ENCODE measurements at regions of chr11 and their contacts with region 1.

Region 1: DNA sequence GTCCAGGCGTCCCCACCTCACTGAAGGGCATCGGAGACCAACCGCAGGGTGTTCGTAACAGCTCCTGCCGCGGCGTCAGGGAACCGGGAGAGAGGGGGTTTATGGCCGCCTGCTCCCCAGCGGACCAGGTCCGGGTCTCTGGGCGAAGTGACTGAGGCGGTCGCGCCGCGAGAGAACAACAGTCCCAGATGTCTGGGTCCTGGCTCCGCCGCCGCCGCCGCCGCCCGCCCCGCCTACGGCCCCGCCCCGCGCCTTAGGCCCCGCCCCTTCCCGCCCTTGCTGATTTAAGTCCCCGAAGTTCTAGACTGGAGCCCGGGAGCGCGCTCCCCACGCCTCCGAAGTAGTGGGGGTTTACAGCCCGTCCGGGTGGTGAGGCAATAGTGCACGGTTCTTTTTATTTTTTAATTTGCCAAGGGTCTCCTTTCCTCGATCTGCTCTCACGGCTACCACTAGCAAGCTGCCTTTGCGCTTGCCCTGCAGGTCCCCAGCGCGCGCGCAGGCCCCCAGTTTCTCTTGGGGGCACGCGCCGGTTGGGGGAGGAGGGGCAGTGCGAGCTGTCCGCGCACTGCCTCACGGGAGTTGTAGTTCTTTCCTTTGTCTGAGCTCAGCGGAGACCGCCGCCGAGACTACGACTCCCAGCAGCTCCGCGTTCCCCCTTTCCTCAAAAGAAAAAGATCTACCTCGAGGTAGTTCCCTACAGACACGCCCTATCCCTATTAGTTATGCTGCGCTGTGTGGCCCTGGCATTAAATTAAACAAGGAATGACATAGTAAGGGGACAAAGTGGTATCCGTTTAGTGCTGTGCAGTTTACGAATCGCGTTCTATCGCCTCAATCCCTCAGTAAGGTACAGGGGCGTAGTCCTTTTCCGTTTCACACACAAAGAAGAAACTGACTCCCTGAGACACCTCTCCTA is at the start of gene PGM2L1:
- DNase-seq: peak; percentile 93 to 96 (median 95)
- H3K4me3 ChIP-seq: peak within 1 kb of the TSS; percentile 81 to 83
- H3K4me3 Mint-ChIP-seq: peak within 1 kb of the TSS; percentile 99 to 100 (median 100)
- H3K27ac ChIP-seq: peak within 1 kb of the TSS; percentile 80
- H3K27ac Mint-ChIP-seq: peak within 1 kb of the TSS; percentile 92 to 100 (median 99)
- H3K4me1 ChIP-seq: peaks cover 20% of the 10 kb centered on the region
- H3K4me1 Mint-ChIP-seq: peaks cover 16 to 37% (median 27%) of the 10 kb centered on the region in 4 donors
- H3K27me3 ChIP-seq: no peaks in the 10 kb centered on the region
- H3K27me3 Mint-ChIP-seq: no peaks in the 10 kb centered on the region
- total RNA-seq, gene PGM2L1: 10.4 to 11.2 TPM

Region 2: GRCh38 chr11:73779084-73779902 is 619.2 kb before region 1 on chr11:
- CTCF ChIA-PET with region 1: no interaction called
- POLR2A ChIA-PET with region 1: interaction called, 6 read pairs
- intact Hi-C with region 1: loop called (anchors 2 kb)
- DNase-seq: peak; percentile 97 to 98 (median 98)
- H3K4me3 ChIP-seq: peak overlapping the region; percentile 58 to 62
- H3K4me3 Mint-ChIP-seq: peak overlapping the region; percentile 91 to 97 (median 94)
- H3K27ac ChIP-seq: peak overlapping the region; percentile 90
- H3K27ac Mint-ChIP-seq: peak overlapping the region; percentile 96 to 100 (median 100)
- H3K4me1 ChIP-seq: peaks cover 5% of the 10 kb centered on the region
- H3K4me1 Mint-ChIP-seq: peaks cover 6 to 13% (median 7%) of the 10 kb centered on the region in 4 donors
- H3K27me3 ChIP-seq: no peaks in the 10 kb centered on the region
- H3K27me3 Mint-ChIP-seq: peaks cover 0 to 4% of the 10 kb centered on the region in 2 donors

Region 3: DNA sequence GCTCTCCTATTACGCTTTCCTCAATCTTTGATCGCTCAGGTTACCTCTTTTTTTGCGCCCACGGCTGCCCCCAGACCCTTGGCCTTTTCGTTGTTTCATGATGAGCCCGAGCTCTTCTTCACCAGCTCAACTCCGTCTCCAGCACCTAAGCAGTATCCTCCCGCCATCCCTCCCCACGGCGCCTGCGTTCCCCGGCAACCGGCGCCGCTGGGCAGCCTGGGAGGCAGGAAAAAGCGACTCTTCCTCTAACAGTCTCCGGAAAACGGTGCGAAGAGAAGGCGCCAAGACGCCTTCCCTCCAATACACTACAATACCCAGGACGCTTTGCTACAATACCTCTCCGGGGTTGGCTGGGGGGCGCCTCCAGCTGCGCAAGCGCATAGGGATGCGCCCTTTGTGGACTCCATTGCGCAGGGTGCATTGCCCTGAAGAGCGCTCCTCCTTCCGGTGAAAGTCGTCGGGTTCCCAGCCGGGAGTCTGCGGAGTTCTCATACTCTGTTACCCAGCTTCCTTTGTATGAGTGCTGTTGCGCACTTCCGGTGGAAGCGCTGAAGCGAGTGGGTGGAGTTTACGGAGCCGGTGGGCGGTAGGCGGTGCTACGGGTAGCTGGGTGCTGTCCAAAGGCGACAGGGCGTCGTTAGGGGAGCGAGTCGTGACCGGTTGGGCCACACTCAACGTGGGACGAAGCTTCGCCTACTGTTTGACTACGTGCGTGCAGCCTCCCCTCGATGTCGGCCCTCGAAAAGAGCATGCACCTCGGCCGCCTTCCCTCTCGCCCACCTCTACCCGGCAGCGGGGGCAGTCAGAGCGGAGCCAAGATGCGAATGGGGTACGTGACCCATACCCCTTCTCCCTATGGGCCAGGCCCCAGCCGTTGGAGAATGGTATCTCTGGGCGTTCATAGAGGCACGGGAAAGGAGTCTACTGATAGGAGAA is 227.5 kb before region 1 on chr11 and contains the starts of genes C2CD3 and PPME1:
- CTCF ChIA-PET with region 1: no interaction called
- POLR2A ChIA-PET with region 1: no interaction called
- intact Hi-C with region 1: loop called (anchors 1 kb)
- DNase-seq: peak; percentile 97 to 99 (median 99)
- H3K4me3 ChIP-seq: peak within 1 kb of the TSS; percentile 74 to 86
- H3K4me3 Mint-ChIP-seq: no peak within 1 kb of the TSS
- H3K27ac ChIP-seq: peak within 1 kb of the TSS; percentile 70
- H3K27ac Mint-ChIP-seq: no peak within 1 kb of the TSS
- H3K4me1 ChIP-seq: peaks cover 40% of the 10 kb centered on the region
- H3K4me1 Mint-ChIP-seq: peaks cover 18 to 22% (median 18%) of the 10 kb centered on the region in 4 donors
- H3K27me3 ChIP-seq: no peaks in the 10 kb centered on the region
- H3K27me3 Mint-ChIP-seq: no peaks in the 10 kb centered on the region
- total RNA-seq, gene C2CD3: 41.9 to 52.7 TPM
- total RNA-seq, gene PPME1: 20.7 to 21.9 TPM

Region 4: GRCh38 chr11:74492974-74493790 is 94.7 kb after region 1 on chr11 and contains the start of gene LIPT2:
- CTCF ChIA-PET with region 1: interaction called, 9 read pairs
- POLR2A ChIA-PET with region 1: interaction called, 40 read pairs
- intact Hi-C with region 1: loop called (anchors 1 kb)
- DNase-seq: peak; percentile 95 to 98 (median 97)
- H3K4me3 ChIP-seq: peak within 1 kb of the TSS; percentile 39 to 84
- H3K4me3 Mint-ChIP-seq: peak within 1 kb of the TSS; percentile 87 to 93 (median 88)
- H3K27ac ChIP-seq: peak within 1 kb of the TSS; percentile 94
- H3K27ac Mint-ChIP-seq: peak within 1 kb of the TSS; percentile 73 to 96 (median 93)
- H3K4me1 ChIP-seq: peaks cover 12% of the 10 kb centered on the region
- H3K4me1 Mint-ChIP-seq: peaks cover 9 to 32% (median 20%) of the 10 kb centered on the region in 4 donors
- H3K27me3 ChIP-seq: no peaks in the 10 kb centered on the region
- H3K27me3 Mint-ChIP-seq: no peaks in the 10 kb centered on the region
- total RNA-seq, gene LIPT2: 8.0 to 15.5 TPM

Region 5: DNA sequence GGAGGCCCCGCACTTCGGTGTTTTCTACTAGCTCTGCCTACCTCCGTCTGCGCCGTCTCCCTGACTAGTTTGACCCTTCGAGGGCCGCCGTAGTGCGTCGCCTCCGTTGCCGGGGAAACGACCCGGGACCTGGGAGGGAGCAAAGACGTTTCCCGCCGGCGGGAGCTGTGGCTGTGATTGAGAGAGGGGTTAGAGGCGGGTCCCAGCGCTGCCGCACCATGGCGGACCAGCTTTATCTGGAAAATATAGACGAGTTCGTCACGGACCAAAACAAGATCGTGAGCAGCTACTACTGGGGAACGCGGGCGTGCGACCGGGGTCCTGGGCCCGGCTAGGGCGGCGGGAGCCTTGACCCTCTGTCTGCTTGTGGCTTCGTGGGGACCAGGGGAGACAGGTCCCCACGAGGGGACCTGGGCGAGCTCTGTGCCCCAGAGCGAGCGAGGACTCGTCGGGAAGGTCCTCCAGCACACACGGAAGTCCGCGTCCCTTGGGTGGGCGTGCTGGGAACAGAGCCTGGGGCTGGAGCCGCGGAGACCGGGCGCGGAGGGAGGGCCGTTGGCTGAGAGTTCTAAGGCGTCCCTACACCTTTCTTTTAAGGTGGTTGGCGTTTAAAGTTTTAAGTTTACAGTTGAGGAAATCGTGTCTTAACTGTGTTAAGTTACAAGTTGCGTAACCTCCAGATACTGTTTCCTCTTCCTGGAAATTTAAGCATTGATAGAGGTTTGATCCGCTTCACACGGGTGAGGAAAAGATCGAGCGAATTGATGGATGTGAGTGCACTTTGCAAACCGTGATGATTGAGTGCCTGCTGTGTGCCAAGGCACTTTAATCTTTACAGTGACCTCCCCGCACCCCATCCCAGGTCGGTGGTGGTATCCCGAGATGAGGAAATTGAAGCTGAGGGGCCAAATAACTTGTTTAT is 194.2 kb after region 1 on chr11 and contains the start of gene POLD3:
- CTCF ChIA-PET with region 1: no interaction called
- POLR2A ChIA-PET with region 1: interaction called, 5 read pairs
- intact Hi-C with region 1: loop called (anchors 1 kb)
- DNase-seq: peak; percentile 92 to 96 (median 94)
- H3K4me3 ChIP-seq: peak within 1 kb of the TSS; percentile 66 to 98
- H3K4me3 Mint-ChIP-seq: peak within 1 kb of the TSS; percentile 95 to 100 (median 98)
- H3K27ac ChIP-seq: peak within 1 kb of the TSS; percentile 87
- H3K27ac Mint-ChIP-seq: peak within 1 kb of the TSS; percentile 93 to 99 (median 99)
- H3K4me1 ChIP-seq: peaks cover 22% of the 10 kb centered on the region
- H3K4me1 Mint-ChIP-seq: peaks cover 17 to 33% (median 26%) of the 10 kb centered on the region in 4 donors
- H3K27me3 ChIP-seq: no peaks in the 10 kb centered on the region
- H3K27me3 Mint-ChIP-seq: no peaks in the 10 kb centered on the region
- total RNA-seq, gene POLD3: 15.0 to 16.8 TPM

Region 6: DNA sequence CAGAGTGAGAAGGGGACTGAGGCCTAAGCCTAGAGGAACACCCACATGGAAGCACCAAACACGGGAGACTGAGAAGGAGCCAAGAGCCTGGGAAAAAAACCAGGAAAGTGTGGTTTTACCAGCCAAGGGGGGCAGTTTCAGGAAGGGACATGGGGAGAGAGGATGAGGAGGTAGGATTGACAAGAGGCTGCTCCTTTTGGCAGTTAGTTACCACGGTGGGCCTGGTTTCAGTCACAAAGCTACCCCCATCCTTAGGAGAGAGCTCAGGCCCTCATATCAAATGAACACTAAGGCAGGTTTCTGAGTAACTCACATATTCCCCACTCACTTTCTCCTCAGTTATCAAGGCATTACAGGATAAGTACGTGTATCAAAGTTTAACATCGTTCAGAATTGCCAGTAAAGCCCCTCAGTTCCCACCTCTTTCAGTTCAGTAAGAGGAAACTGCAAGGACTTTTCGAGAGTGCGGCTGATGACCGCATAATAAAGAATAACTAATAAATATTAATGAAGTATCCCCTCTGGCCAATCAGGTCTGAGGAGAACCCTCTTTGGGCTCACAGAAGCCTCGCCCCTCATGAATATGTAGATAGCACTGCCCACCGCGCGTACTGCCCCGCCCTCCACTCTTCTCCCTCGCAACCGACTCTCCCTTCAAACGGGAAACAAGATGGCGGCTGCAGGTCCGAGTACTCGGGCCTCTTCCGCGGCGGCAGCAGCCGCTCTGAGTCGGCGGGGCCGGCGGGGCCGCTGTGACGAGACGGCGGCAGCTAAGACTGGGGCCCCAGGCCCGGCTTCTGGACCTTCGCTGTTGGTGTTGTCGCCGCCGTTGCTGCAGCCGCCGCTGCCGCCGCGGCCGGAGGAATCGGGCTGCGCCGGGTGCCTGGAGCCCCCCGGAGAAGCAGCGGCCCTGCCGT is 350.0 kb after region 1 on chr11 and contains the start of gene RNF169:
- CTCF ChIA-PET with region 1: no interaction called
- POLR2A ChIA-PET with region 1: no interaction called
- intact Hi-C with region 1: loop called (anchors 1 kb)
- DNase-seq: peak; percentile 88 to 95 (median 89)
- H3K4me3 ChIP-seq: peak within 1 kb of the TSS; percentile 63 to 73
- H3K4me3 Mint-ChIP-seq: peak within 1 kb of the TSS; percentile 89 to 97 (median 92)
- H3K27ac ChIP-seq: peak within 1 kb of the TSS; percentile 72
- H3K27ac Mint-ChIP-seq: peak within 1 kb of the TSS; percentile 84 to 98 (median 94)
- H3K4me1 ChIP-seq: peaks cover 38% of the 10 kb centered on the region
- H3K4me1 Mint-ChIP-seq: peaks cover 29 to 59% (median 38%) of the 10 kb centered on the region in 4 donors
- H3K27me3 ChIP-seq: no peaks in the 10 kb centered on the region
- H3K27me3 Mint-ChIP-seq: no peaks in the 10 kb centered on the region
- total RNA-seq, gene RNF169: 24.6 to 25.0 TPM

Region 7: GRCh38 chr11:74948898-74949747 is 550.6 kb after region 1 on chr11 and contains the starts of genes SPCS2 and XRRA1:
- CTCF ChIA-PET with region 1: no interaction called
- POLR2A ChIA-PET with region 1: no interaction called
- intact Hi-C with region 1: loop called (anchors 10 kb)
- DNase-seq: peak; percentile 96 to 99 (median 97)
- H3K4me3 ChIP-seq: peak within 1 kb of the TSS; percentile 78 to 100
- H3K4me3 Mint-ChIP-seq: peak within 1 kb of the TSS; percentile 93 to 100 (median 98)
- H3K27ac ChIP-seq: peak within 1 kb of the TSS; percentile 89
- H3K27ac Mint-ChIP-seq: peak within 1 kb of the TSS; percentile 93 to 100 (median 96)
- H3K4me1 ChIP-seq: peaks cover 52% of the 10 kb centered on the region
- H3K4me1 Mint-ChIP-seq: peaks cover 38 to 56% (median 53%) of the 10 kb centered on the region in 4 donors
- H3K27me3 ChIP-seq: no peaks in the 10 kb centered on the region
- H3K27me3 Mint-ChIP-seq: no peaks in the 10 kb centered on the region
- total RNA-seq, gene SPCS2: 145 to 148 TPM
- total RNA-seq, gene XRRA1: 18.8 to 21.1 TPM